CD4-positive, alpha-beta memory T cell (primary cell): ENCODE measurements at regions of chr9 and their contacts with region 1.

Region 1: DNA sequence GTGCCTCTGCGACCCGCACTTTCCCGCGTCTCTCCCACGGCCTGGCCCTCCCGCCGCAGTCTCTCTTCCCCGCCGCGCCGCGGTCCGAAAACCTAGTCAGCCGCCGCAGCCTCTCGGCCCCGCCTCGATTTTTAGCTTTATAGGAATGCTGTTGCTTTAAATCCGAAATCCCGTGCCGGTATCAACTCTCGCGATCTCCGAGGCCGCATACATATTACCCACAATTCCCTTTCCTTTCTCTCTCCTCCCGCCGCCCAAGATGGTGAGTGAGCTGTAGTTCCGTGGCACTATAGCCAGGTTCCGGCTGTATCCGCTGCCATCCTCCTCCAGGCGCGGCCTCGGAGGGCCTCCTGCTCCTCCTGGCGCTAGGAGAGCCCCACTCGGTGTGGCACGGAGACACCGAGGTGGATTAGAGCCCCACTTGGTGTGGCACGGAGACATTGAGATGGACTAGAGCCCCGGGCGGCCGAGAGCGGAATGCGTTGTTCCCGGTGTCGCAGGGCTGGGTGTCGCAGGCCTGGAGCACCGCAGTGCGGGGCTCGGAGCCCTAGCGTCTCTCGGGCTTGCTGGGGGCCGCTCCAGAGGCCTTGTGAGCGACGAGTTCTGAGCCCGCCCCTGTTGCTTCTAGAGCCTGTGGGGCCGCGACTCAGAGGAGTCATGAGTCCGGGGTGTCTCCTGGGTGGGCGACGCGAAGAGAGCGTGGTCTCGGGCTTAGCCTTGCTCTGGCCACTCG is at the starts of genes MED22 and RPL7A:
- DNase-seq: peak; percentile 92 to 94 (median 92)
- H3K4me3 ChIP-seq: peak within 1 kb of the TSS; percentile 80 to 99
- H3K4me3 Mint-ChIP-seq: peak within 1 kb of the TSS; percentile 97 to 100 (median 98)
- H3K27ac ChIP-seq: peak within 1 kb of the TSS; percentile 88
- H3K27ac Mint-ChIP-seq: peak within 1 kb of the TSS; percentile 93 to 99 (median 96)
- H3K4me1 ChIP-seq: peaks cover 33% of the 10 kb centered on the region
- H3K4me1 Mint-ChIP-seq: peaks cover 21 to 47% (median 33%) of the 10 kb centered on the region in 4 donors
- H3K27me3 ChIP-seq: no peaks in the 10 kb centered on the region
- H3K27me3 Mint-ChIP-seq: no peaks in the 10 kb centered on the region
- total RNA-seq, gene MED22: 40.2 to 42.8 TPM
- total RNA-seq, gene RPL7A: 2,104 to 2,268 TPM

Region 2: DNA sequence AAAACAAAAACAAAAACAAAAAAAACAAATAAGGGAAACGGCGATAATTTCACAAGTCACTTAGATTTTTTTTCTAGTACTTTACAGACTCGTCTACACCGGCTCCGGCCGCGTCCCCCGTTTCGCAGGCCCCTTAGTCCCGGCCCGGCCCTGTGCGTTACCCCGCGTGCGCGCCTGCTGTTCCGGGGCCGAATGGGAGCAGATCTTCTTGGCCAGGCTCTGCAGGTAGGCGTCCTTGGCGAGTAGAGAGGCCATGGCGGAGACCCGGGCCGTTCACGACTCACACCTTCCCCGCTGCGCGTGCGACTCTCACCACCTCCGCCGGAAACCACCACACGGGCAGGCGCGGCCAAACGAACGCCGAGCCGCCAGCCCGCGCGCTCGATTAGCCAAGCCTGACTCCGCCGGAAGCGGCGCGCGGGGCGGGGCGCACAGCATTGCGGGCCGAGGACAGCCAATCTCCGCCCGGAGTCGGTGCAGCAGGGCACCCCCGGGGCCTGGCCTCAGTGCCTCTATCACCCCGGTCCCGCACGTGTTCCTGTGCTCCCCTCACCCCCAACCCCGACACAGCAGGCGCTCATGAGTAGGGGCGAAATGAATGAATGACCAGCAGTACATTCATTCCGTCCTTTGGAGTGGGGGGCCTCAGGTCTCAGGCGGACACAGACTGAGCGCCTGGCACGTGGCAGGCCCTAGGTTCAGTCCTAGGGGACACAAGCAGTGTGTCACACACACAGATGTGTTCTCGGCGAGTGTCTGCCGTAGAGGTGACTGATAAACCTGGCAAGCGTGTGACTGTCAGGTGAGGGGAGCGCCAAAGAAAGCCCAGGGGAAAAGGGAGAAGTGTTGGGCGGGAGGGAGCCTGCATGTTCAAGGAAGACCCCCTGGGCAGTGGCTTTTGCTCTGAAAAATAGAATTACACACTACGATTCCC is 12.0 kb before region 1 on chr9 and contains the start of gene SURF6:
- CTCF ChIA-PET with region 1: interaction called, 3 read pairs
- POLR2A ChIA-PET with region 1: interaction called, 14 read pairs
- intact Hi-C with region 1: loop called (anchors 1 kb)
- DNase-seq: peak; percentile 93 to 94 (median 94)
- H3K4me3 ChIP-seq: peak within 1 kb of the TSS; percentile 50 to 69
- H3K4me3 Mint-ChIP-seq: peak within 1 kb of the TSS; percentile 92 to 97 (median 96)
- H3K27ac ChIP-seq: peak within 1 kb of the TSS; percentile 64
- H3K27ac Mint-ChIP-seq: peak within 1 kb of the TSS; percentile 86 to 96 (median 93)
- H3K4me1 ChIP-seq: peaks cover 41% of the 10 kb centered on the region
- H3K4me1 Mint-ChIP-seq: peaks cover 16 to 64% (median 28%) of the 10 kb centered on the region in 4 donors
- H3K27me3 ChIP-seq: no peaks in the 10 kb centered on the region
- H3K27me3 Mint-ChIP-seq: no peaks in the 10 kb centered on the region
- total RNA-seq, gene SURF6: 28.6 to 28.9 TPM

Region 3: DNA sequence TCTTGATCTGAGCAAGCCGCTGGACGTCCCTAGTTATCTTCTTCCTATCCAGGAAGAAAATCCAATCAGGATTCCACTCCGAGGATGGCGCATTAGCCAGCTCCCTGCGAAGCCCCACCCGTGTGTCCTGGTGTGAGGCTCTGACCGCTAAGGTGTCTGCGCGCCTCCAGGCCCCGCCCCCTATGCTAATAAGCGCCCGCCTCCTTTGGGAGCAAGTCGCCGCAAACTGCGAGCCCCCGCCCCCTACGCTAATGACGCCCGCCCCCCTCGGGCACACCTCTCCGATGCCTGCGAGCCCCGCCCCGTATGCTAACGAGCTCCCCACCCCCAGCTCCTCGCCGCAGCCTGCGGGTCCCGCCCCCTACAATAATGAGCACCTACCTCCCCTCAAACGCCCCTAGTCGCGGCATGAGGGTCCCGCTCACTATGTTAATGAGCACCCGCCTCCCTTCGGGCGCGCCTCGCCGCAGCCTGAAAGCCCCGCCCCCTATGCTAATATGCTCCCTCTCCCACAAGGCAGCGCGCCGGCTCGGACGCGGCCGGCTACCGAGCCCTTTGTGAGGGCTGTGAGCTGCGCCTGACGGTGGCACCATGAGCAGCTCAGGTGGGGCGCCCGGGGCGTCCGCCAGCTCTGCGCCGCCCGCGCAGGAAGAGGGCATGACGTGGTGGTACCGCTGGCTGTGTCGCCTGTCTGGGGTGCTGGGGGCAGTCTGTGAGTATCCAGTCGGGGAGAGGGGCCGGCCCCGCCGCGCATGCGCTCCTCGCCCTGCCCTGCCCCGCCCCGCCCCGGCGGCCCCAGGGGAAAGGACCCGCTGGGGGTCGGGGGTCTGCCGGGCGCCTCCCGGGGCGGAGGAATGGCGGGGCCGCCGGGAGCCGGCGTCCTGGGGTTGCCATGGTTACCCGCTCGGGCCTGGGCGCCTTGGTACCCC is 111.6 kb after region 1 on chr9 and contains the start of gene CACFD1:
- CTCF ChIA-PET with region 1: no interaction called
- POLR2A ChIA-PET with region 1: interaction called, 9 read pairs
- intact Hi-C with region 1: loop called (anchors 2 kb)
- DNase-seq: peak; percentile 87 to 95 (median 88)
- H3K4me3 ChIP-seq: peak within 1 kb of the TSS; percentile 36 to 87
- H3K4me3 Mint-ChIP-seq: peak within 1 kb of the TSS; percentile 88 to 96 (median 92)
- H3K27ac ChIP-seq: peak within 1 kb of the TSS; percentile 78
- H3K27ac Mint-ChIP-seq: peak within 1 kb of the TSS; percentile 93 to 97 (median 95)
- H3K4me1 ChIP-seq: peaks cover 10% of the 10 kb centered on the region
- H3K4me1 Mint-ChIP-seq: peaks cover 2 to 21% (median 6%) of the 10 kb centered on the region in 4 donors
- H3K27me3 ChIP-seq: no peaks in the 10 kb centered on the region
- H3K27me3 Mint-ChIP-seq: no peaks in the 10 kb centered on the region
- total RNA-seq, gene CACFD1: 2.5 to 2.6 TPM